ENCODE measurements at regions of chr18 and their contacts with region 1.

Region 1: DNA sequence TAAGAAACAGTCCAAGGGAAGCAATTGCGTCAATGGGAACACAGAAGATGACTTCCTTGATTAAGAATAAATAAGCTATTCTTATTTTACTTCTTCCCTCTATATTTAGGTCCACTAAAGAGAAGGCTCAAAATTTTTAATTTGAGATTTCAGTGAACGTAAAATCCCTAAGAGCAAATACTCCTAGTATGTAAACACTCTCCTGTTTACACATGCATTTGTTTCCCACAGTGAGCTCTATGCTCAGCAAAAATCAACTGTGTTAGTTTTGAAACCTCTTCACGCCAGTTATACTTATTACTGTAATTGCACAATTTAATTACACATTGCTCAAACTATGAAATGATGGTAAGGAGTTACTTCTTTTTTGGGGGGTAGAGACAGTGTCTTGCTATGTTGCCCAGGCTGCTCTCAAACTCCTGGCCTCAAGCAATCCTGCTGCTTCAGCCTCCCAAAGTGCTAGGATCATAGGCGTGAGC is 8.8 kb downstream of the SLC39A6 start:
- DNase-seq: no peak
- ATAC-seq: no peak
- H3K4me3 ChIP-seq: no peak overlapping the region
- H3K27ac ChIP-seq: no peak overlapping the region
- H3K4me1 ChIP-seq: no peaks in the 10 kb centered on the region
- H3K27me3 ChIP-seq: no peaks in the 10 kb centered on the region
- CTCF ChIP-seq: no peak

Region 2: DNA sequence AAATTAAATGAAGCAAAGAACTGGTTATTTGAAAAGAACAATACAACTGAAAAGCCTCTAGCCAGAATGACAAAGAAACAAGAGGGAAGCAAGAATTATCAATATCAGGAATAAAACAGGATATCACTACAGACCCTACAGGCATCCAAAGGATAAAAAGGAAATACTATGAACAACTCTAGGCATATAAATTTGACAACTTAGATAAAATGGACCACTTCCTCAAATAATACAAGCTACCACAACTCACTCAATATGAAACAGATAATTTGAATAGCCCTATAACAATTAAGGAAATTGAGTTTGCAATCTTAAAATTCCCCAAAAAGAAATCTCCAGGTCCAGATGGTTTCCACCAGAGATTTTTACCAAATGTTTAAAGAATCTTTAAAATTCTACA is 72.8 kb before region 1 on chr18:
- CTCF ChIA-PET with region 1: no interaction called
- POLR2A ChIA-PET with region 1: no interaction called
- in situ Hi-C with region 1: no loop called
- intact Hi-C with region 1: no loop called
- DNase-seq: no peak
- ATAC-seq: no peak
- H3K4me3 ChIP-seq: no peak overlapping the region
- H3K27ac ChIP-seq: no peak overlapping the region
- H3K4me1 ChIP-seq: no peaks in the 10 kb centered on the region
- H3K27me3 ChIP-seq: no peaks in the 10 kb centered on the region
- CTCF ChIP-seq: no peak

Region 3: GRCh38 chr18:36107477-36107876 is 12.9 kb before region 1 on chr18:
- CTCF ChIA-PET with region 1: no interaction called
- POLR2A ChIA-PET with region 1: interaction called, 13 read pairs
- in situ Hi-C with region 1: no loop called
- intact Hi-C with region 1: no loop called
- DNase-seq: no peak
- ATAC-seq: no peak
- H3K4me3 ChIP-seq: no peak overlapping the region
- H3K27ac ChIP-seq: no peak overlapping the region
- H3K4me1 ChIP-seq: no peaks in the 10 kb centered on the region
- H3K27me3 ChIP-seq: no peaks in the 10 kb centered on the region
- CTCF ChIP-seq: no peak